Activated CD4-positive, alpha-beta T cell treated with anti-CD3 and anti-CD28 coated beads for 36 hours (primary cell): ENCODE measurements at regions of chr11 and their contacts with region 1.

Region 1: GRCh38 chr11:34916015-34916842 is at the starts of genes APIP and PDHX:
- DNase-seq: peak; percentile 100
- ATAC-seq: peak; percentile 95
- H3K4me3 Mint-ChIP-seq: peak within 1 kb of the TSS; percentile 91
- H3K27ac Mint-ChIP-seq: peak within 1 kb of the TSS; percentile 95
- H3K4me1 Mint-ChIP-seq: peaks cover 40% of the 10 kb centered on the region
- H3K27me3 Mint-ChIP-seq: no peaks in the 10 kb centered on the region
- total RNA-seq, gene APIP: 43.6 to 43.7 TPM
- total RNA-seq, gene PDHX: 29.8 to 46.2 TPM

Region 2: DNA sequence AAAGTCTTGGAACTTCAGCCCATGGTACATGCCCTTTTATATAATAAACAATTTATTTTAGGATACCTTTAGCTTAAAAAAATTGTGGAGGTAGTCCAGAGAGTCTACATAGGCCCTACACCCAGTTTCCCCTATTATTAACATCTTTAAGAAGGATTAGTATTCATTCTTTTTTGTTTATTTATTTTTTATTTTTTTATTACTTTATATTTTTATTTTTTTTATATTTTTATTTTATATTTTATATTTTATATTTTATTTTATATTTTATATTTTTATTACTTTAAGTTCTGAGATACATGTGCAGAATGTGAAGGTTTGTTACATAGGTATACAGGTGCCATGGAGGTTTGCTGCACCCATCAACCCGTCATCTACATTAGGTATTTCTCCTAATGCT is 542.5 kb before region 1 on chr11:
- CTCF ChIA-PET with region 1: no interaction called
- POLR2A ChIA-PET with region 1: no interaction called
- intact Hi-C with region 1: loop called in 1 of 2 experiments (anchors 5 kb)
- DNase-seq: no peak
- ATAC-seq: no peak
- H3K4me3 Mint-ChIP-seq: no peak overlapping the region
- H3K27ac Mint-ChIP-seq: no peak overlapping the region
- H3K4me1 Mint-ChIP-seq: peaks cover 15% of the 10 kb centered on the region
- H3K27me3 Mint-ChIP-seq: peaks cover 8% of the 10 kb centered on the region

Region 3: GRCh38 chr11:34926101-34926830 is 10.0 kb after region 1 on chr11:
- CTCF ChIA-PET with region 1: interaction called, 13 read pairs
- POLR2A ChIA-PET with region 1: interaction called, 4 read pairs
- intact Hi-C with region 1: no loop called
- DNase-seq: peak; percentile 8
- ATAC-seq: peak; percentile 68
- H3K4me3 Mint-ChIP-seq: no peak overlapping the region
- H3K27ac Mint-ChIP-seq: no peak overlapping the region
- H3K4me1 Mint-ChIP-seq: peaks cover 20% of the 10 kb centered on the region
- H3K27me3 Mint-ChIP-seq: no peaks in the 10 kb centered on the region

Region 4: DNA sequence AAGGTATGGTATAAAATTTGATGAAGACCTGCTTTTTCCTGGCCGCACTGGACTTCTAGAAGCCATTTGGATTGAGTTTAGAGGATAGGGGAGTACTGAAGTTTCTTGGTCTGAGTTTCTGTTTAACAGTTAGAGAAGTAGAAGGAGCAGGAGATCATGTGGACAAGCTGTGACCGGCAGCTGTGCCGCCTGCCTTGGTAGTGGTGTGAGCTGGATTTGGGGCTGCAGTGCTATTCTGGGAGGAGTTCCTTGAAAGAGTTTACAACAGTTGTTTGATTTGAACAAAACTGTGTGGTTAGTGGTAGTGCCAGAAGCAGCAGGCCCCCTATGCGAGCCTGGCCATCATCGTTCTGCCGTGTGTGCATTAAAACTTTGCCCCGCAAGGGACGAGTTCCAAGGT is 105.4 kb after region 1 on chr11:
- CTCF ChIA-PET with region 1: no interaction called
- POLR2A ChIA-PET with region 1: no interaction called
- intact Hi-C with region 1: no loop called
- DNase-seq: no peak
- ATAC-seq: no peak
- H3K4me3 Mint-ChIP-seq: no peak overlapping the region
- H3K27ac Mint-ChIP-seq: no peak overlapping the region
- H3K4me1 Mint-ChIP-seq: no peaks in the 10 kb centered on the region
- H3K27me3 Mint-ChIP-seq: no peaks in the 10 kb centered on the region

Region 5: DNA sequence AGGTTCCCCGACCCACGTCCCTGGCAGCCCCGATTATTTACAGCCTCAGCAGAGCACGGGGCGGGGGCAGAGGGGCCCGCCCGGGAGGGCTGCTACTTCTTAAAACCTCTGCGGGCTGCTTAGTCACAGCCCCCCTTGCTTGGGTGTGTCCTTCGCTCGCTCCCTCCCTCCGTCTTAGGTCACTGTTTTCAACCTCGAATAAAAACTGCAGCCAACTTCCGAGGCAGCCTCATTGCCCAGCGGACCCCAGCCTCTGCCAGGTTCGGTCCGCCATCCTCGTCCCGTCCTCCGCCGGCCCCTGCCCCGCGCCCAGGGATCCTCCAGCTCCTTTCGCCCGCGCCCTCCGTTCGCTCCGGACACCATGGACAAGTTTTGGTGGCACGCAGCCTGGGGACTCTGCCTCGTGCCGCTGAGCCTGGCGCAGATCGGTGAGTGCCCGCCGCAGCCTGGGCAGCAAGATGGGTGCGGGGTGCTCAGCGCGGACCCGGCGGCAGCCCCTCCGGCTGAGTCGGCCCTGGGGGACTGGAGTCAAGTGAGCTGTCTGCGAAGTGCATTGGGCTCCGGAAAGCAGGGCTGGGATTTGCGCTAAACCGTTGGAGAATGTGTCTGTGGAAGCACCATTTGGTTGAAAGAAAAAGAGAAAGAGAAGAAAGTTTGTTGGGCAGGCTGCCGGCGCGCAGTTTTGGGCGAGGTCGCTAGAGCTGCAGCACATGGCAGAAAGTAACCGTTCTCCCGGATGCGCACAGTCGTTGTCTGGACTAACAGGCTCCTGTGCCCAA is 222.9 kb after region 1 on chr11 and contains the start of gene CD44:
- CTCF ChIA-PET with region 1: no interaction called
- POLR2A ChIA-PET with region 1: no interaction called
- intact Hi-C with region 1: loop called in 1 of 2 experiments (anchors 2 kb)
- DNase-seq: peak; percentile 83
- ATAC-seq: peak; percentile 67
- H3K4me3 Mint-ChIP-seq: peak within 1 kb of the TSS; percentile 83
- H3K27ac Mint-ChIP-seq: peak within 1 kb of the TSS; percentile 93
- H3K4me1 Mint-ChIP-seq: peaks cover 52% of the 10 kb centered on the region
- H3K27me3 Mint-ChIP-seq: no peaks in the 10 kb centered on the region
- total RNA-seq, gene CD44: 357 to 435 TPM

Region 6: GRCh38 chr11:35337136-35337918 is 421.1 kb after region 1 on chr11:
- CTCF ChIA-PET with region 1: no interaction called
- POLR2A ChIA-PET with region 1: no interaction called
- intact Hi-C with region 1: loop called in 1 of 2 experiments (anchors 2 kb)
- DNase-seq: peak; percentile 46
- ATAC-seq: peak; percentile 96
- H3K4me3 Mint-ChIP-seq: no peak overlapping the region
- H3K27ac Mint-ChIP-seq: peak overlapping the region; percentile 19
- H3K4me1 Mint-ChIP-seq: peaks cover 36% of the 10 kb centered on the region
- H3K27me3 Mint-ChIP-seq: no peaks in the 10 kb centered on the region

Region 7: DNA sequence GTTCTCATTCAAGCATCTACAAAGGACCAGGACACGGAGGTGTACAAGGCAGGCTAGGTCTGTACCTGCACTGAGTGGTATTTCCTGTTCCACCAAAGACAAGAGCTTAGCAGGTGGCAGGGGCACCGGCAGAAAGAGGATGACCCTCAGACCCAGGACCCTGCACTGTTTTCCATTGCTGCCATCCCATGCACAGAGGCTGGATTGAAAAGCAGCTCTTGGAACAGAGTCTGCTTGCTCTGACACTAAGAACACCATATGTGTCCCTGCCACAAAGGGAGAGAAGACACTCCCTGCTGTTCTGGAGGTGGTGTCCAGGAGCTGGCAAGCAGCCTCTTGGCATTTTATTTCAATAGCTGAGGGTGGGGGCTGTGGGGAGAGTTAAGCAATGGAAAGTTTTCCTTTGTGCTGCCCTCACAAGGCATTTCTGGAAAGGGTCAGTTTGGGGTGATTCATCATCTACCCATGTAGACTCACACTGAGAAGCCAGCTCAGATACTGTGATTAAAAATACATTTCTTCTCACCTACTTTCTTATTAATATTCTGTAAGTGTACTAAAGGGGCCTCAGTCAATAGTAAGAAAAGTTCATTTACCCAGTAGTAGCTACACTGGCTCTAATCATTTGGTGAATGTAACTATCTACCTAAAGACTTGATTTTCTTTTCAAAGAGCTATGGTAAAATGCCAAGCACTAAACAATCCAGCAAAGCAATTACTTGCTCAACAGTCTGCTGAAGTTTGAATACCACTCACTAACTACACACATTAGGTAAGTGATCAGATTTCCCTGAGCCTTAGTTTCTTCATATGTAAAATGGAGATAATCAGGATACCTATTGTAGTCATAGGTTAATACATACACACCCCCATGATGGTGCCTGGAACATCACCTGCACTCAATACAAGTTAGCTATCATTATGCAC is 447.9 kb after region 1 on chr11:
- CTCF ChIA-PET with region 1: no interaction called
- POLR2A ChIA-PET with region 1: no interaction called
- intact Hi-C with region 1: no loop called
- DNase-seq: no peak
- ATAC-seq: no peak
- H3K4me3 Mint-ChIP-seq: no peak overlapping the region
- H3K27ac Mint-ChIP-seq: no peak overlapping the region
- H3K4me1 Mint-ChIP-seq: no peaks in the 10 kb centered on the region
- H3K27me3 Mint-ChIP-seq: no peaks in the 10 kb centered on the region

Region 8: DNA sequence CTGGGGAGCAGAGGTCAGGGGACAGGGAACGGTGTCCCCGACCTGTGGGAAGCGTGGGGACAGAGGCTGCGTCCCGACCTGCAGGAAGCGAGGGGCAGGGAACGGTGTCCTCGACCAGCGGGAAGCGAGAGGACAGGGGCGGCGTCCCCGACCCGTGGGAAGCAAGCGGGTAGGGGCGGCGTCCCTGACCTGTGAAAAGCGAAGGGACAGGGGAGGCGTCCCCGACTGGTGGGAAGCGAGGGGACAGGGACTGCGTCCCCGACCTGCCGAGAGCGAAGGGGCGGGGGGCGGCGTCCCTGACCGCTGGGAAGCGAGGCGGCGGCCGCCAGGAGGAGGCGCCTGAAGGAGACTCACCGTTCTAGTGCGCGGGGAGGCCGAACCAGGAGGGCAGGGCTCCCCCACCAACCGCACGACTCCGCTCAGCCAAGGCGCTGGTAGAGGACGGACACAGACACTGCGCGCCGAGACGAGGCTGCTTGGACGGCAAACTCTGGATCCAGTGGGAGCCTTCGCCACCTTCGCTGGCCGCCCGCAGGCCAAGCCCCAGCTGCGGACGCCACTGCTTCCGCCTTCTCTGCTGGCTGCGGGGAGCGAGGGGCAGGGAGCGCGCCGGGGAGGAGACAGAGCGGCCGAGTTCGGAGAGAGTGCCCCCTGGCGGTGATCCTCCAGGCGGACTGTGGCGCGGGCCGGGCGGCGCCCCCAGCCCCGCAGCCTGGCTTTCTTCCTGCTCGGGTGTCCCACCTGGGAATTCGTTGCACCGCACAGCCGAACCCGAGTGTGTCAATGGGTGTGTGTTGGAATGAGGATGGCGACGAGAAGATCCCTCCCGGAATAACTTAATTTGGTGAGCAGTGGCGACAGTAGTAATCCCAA is 1593.7 kb after region 1 on chr11 and contains the start of gene TRAF6:
- CTCF ChIA-PET with region 1: no interaction called
- POLR2A ChIA-PET with region 1: no interaction called
- intact Hi-C with region 1: loop called in 1 of 2 experiments (anchors 5 kb)
- DNase-seq: peak; percentile 95
- ATAC-seq: peak; percentile 95
- H3K4me3 Mint-ChIP-seq: peak within 1 kb of the TSS; percentile 95
- H3K27ac Mint-ChIP-seq: peak within 1 kb of the TSS; percentile 88
- H3K4me1 Mint-ChIP-seq: peaks cover 32% of the 10 kb centered on the region
- H3K27me3 Mint-ChIP-seq: peaks cover 5% of the 10 kb centered on the region
- total RNA-seq, gene TRAF6: 11.1 to 12.5 TPM